Pancreas (tissue), 10 donors: ENCODE measurements at regions of chr2 and their contacts with region 1.

Region 1: DNA sequence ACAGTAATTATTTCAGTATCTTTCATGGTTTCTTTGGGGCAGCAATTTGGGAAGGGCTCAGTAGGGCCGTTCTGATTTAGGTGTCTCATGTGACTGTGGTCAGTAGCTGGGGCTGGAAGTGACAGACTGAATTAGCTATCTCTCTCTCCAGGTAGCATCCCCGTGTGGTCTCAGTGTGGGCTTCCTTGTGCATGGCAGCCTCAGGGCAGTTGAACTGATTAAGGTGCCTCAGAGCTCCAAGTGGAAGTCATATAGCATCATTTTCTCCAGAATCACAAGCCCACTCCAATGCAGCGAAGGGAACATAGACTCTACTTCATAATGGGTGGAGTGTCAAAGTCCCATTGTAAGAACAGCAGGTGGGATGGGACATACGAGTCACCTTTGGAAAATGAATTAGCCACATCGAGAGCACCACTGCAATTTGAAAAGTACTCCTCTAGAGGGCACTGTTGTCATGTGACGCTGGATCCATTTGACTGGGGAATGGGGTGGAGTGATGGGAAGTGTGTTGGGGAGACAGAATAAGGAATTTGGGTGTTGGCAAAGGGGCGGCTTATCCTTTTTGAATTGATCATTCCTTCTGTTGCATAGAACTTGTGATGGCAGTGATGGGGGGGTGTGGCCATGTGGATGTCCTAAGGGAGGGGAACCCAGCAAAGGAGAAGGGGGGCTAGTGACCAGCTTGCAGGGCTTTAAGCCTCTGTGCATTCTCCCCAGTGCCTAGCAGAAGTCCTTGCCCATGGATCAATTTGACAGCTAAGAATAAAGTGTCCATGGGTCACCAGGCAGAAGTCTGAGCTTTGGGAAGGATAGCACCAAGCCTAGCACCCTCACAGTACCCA is 39.3 kb upstream of the FAM136A start:
- DNase-seq: peak in 3 of 6 donors; percentile 11 to 52 (median 26)
- ATAC-seq: peak; percentile 64 to 95 (median 86)
- H3K4me3 ChIP-seq: no peak overlapping the region
- H3K27ac ChIP-seq: no peak overlapping the region
- H3K4me1 ChIP-seq: no peaks in the 10 kb centered on the region
- H3K27me3 ChIP-seq: no peaks in the 10 kb centered on the region
- CTCF ChIP-seq: peak; percentile 59 to 80 (median 68)

Region 2: DNA sequence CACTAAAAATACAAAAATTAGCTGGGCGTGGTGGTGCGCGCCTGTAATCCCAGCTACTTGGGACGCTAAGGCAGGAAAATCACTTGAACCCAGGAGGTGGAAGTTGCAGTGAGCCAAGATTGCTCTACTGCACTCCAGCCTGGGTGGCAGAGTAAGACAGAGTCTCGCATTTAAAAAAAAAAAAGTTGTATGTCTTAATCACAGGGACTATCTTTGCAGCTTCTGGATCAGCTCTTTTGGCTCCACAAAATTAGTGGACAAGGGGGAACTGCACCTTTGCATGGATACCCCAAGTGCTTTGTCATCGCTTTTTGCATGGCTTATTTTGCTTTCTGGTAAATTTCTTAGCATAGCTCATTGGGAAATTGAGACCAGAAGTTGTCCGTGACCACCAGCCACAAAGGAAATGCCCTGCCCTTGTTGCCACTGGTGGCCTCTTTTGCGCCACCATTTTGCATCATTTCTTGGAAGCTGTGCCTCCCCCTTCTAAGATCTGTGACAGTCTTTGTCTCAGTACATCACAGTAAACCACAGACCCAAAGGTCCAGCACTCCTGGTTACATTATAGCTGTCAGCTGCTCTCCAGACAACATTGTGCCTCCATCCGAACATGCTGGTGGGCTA is 297.8 kb before region 1 on chr2:
- intact Hi-C with region 1: no loop called
- DNase-seq: peak in 1 of 6 donors; percentile 36
- ATAC-seq: peak in 2 of 4 donors; percentile 34 to 69
- H3K4me3 ChIP-seq: no peak overlapping the region
- H3K27ac ChIP-seq: peak overlapping the region in 1 of 4 donors; percentile 19
- H3K4me1 ChIP-seq: no peaks in the 10 kb centered on the region
- H3K27me3 ChIP-seq: no peaks in the 10 kb centered on the region
- CTCF ChIP-seq: no peak

Region 3: GRCh38 chr2:70616168-70616694 is 275.1 kb after region 1 on chr2:
- intact Hi-C with region 1: loop called in 1 of 3 experiments (anchors 5 kb)
- DNase-seq: peak in 1 of 6 donors; percentile 51
- ATAC-seq: peak in 3 of 4 donors; percentile 22 to 57 (median 29)
- H3K4me3 ChIP-seq: no peak overlapping the region
- H3K27ac ChIP-seq: no peak overlapping the region
- H3K4me1 ChIP-seq: no peaks in the 10 kb centered on the region
- H3K27me3 ChIP-seq: no peaks in the 10 kb centered on the region
- CTCF ChIP-seq: no peak

Region 4: DNA sequence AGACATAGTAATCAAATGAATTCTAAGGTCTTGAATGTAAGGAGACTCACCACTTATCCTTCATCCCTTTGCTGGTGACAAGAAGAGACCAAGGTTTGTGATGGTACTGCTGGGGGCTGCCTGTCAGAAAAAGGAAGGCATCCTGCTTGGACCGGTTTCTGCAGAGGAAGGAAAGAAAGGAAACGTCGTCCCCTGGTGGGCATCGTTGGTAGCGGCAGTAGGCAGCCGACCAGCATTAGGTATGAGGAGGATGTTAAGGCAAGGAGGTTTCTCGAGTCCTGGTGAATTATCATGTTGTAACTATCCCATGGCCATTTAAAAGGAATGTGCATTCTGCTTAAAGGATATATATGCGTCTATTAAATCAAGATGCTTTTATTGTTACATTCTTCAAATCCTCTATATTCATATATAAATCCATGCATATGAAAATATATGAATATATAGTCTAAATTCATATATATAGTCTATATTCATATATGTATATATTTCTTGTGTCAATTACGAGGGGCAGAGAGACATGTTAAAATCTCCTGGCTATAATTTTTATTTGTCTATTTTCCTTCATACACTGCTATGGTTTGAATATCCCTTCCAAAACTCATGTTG is 306.8 kb after region 1 on chr2:
- intact Hi-C with region 1: loop called in 1 of 3 experiments (anchors 10 kb)
- DNase-seq: peak; percentile 41 to 82 (median 61)
- ATAC-seq: peak; percentile 66 to 92 (median 90)
- H3K4me3 ChIP-seq: no peak overlapping the region
- H3K27ac ChIP-seq: no peak overlapping the region
- H3K4me1 ChIP-seq: no peaks in the 10 kb centered on the region
- H3K27me3 ChIP-seq: no peaks in the 10 kb centered on the region
- CTCF ChIP-seq: peak; percentile 75 to 98 (median 96)